Natural killer cell (primary cell): ENCODE measurements at regions of chr3 and their contacts with region 1.

Region 1: GRCh38 chr3:43690400-43691119 is at the start of gene ABHD5:
- DNase-seq: peak; percentile 91 to 99
- ATAC-seq: peak; percentile 85 to 95 (median 91)
- H3K4me3 ChIP-seq: peak within 1 kb of the TSS; percentile 66
- H3K4me3 Mint-ChIP-seq: peak within 1 kb of the TSS; percentile 91
- H3K27ac ChIP-seq: peak within 1 kb of the TSS; percentile 64
- H3K27ac Mint-ChIP-seq: peak within 1 kb of the TSS; percentile 88 to 97
- H3K4me1 ChIP-seq: peaks cover 9% of the 10 kb centered on the region
- H3K4me1 Mint-ChIP-seq: peaks cover 22 to 37% of the 10 kb centered on the region in 2 donors
- H3K27me3 ChIP-seq: no peaks in the 10 kb centered on the region
- H3K27me3 Mint-ChIP-seq: peaks cover 0 to 3% of the 10 kb centered on the region in 2 donors
- CTCF ChIP-seq: peak; percentile 27
- total RNA-seq, gene ABHD5: 14.1 to 58.6 (median 16.6) TPM

Region 2: GRCh38 chr3:43621656-43622432 is 68.7 kb before region 1 on chr3 and contains the start of gene ANO10:
- intact Hi-C with region 1: loop called (anchors 1 kb)
- DNase-seq: peak; percentile 95 to 96
- ATAC-seq: peak; percentile 92 to 97 (median 94)
- H3K4me3 ChIP-seq: peak within 1 kb of the TSS; percentile 66
- H3K4me3 Mint-ChIP-seq: peak within 1 kb of the TSS; percentile 95
- H3K27ac ChIP-seq: peak within 1 kb of the TSS; percentile 39
- H3K27ac Mint-ChIP-seq: peak within 1 kb of the TSS; percentile 77 to 85
- H3K4me1 ChIP-seq: peaks cover 14% of the 10 kb centered on the region
- H3K4me1 Mint-ChIP-seq: peaks cover 16 to 19% of the 10 kb centered on the region in 2 donors
- H3K27me3 ChIP-seq: no peaks in the 10 kb centered on the region
- H3K27me3 Mint-ChIP-seq: peaks cover 0 to 5% of the 10 kb centered on the region in 2 donors
- CTCF ChIP-seq: no peak
- total RNA-seq, gene ANO10: 8.9 to 11.2 (median 10.9) TPM

Region 3: DNA sequence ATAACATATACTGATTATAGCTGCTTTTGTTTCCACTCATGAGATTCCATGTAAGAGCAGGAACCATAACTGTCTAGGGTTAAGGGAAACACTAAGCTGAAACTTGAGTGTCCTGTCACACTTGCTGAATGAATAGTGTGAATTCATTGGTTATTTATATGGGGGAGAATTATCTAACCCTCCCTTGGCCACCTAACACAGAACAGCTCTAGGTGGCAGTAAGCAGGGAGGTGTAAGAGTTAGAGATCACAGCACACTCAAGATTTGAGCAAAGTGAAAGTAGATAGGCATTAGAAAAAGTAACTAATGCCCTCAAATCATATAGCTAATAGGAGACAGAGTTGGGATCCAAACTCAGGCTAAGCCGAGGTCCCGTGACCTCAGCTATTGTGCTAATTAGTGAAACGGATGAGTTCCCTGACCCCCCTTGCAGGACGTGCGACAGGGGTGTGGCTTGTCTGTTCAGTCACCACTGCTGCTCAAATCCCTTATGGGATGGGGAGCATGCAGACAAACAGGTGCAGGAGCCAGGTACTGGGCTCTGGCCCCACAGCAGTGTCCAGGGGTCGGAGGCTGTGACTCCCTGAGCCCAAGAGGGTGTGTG is 41.1 kb before region 1 on chr3:
- intact Hi-C with region 1: no loop called
- DNase-seq: no peak
- ATAC-seq: no peak
- H3K4me3 ChIP-seq: no peak overlapping the region
- H3K4me3 Mint-ChIP-seq: no peak overlapping the region
- H3K27ac ChIP-seq: no peak overlapping the region
- H3K27ac Mint-ChIP-seq: no peak overlapping the region
- H3K4me1 ChIP-seq: no peaks in the 10 kb centered on the region
- H3K4me1 Mint-ChIP-seq: no peaks in the 10 kb centered on the region
- H3K27me3 ChIP-seq: peaks cover 5% of the 10 kb centered on the region
- H3K27me3 Mint-ChIP-seq: peaks cover 18 to 22% of the 10 kb centered on the region in 2 donors
- CTCF ChIP-seq: no peak